Posterior vena cava (tissue), 2 donors: ENCODE measurements at regions of chr9 and their contacts with region 1.

Region 1: GRCh38 chr9:137227063-137227852 is at the start of gene RNF224:
- DNase-seq: peak; percentile 92
- total RNA-seq, gene RNF224: not detected

Region 2: GRCh38 chr9:137114610-137115391 is 112.5 kb before region 1 on chr9 and contains the start of gene DPP7:
- intact Hi-C with region 1: loop called in 1 of 2 experiments (anchors 5 kb)
- DNase-seq: peak; percentile 92
- total RNA-seq, gene DPP7: 108 to 128 TPM

Region 3: GRCh38 chr9:137256856-137257255 is 29.6 kb after region 1 on chr9:
- intact Hi-C with region 1: loop called in 1 of 2 experiments (anchors 1 kb)
- DNase-seq: no peak